CD8-positive, alpha-beta T cell (primary cell): ENCODE measurements at regions of chr1 and their contacts with region 1.

Region 1: DNA sequence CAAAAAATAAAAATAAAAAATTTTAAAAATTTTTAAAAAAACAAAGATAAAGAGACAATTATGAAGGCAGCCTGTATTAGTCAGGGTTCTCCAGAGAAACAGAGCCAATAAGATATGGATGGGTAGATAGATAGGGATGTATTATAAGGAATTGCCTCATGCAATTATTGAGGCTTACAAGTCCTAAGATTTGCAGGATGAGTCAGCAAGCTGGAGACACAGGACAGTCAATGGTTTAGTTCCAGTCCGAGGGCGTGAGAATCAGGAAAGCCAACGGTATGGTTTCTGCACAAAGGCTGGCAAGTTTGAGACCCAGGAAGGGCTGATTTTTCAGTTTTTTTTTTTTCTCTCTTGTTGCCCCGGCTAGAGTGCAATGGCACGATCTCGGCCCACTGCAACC is 24.1 kb upstream of the EIF4G3 start:
- DNase-seq: no peak
- ATAC-seq: no peak
- H3K4me3 ChIP-seq: no peak overlapping the region
- H3K4me3 Mint-ChIP-seq: no peak overlapping the region
- H3K27ac ChIP-seq: no peak overlapping the region
- H3K27ac Mint-ChIP-seq: no peak overlapping the region
- H3K4me1 ChIP-seq: no peaks in the 10 kb centered on the region
- H3K4me1 Mint-ChIP-seq: no peaks in the 10 kb centered on the region
- H3K27me3 ChIP-seq: no peaks in the 10 kb centered on the region
- H3K27me3 Mint-ChIP-seq: peaks cover 5% of the 10 kb centered on the region
- CTCF ChIP-seq: no peak

Region 2: DNA sequence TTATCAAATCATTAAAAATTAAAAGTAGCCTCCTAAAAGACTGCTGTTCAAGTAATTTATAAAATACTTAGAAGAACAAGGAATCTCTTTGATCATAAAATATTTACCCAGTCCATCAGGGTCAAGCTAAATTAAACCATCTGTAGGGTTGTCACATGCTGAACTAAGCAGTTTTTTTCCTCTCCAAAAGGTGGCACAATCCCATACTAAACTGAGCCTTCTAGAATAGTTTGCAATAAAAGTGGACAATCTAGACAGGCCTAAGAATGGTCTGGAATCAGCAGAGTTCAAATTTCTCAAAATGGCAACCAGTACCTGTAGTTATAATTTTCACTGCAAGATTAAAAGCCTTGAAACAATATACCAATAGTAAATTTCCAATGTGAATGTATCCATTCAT is 218.9 kb before region 1 on chr1:
- CTCF ChIA-PET with region 1: interaction called, 4 read pairs
- POLR2A ChIA-PET with region 1: no interaction called
- intact Hi-C with region 1: loop called (anchors 1 to 2 kb)
- DNase-seq: peak in 1 of 9 experiments; percentile 3
- ATAC-seq: no peak
- H3K4me3 ChIP-seq: no peak overlapping the region
- H3K4me3 Mint-ChIP-seq: no peak overlapping the region
- H3K27ac ChIP-seq: no peak overlapping the region
- H3K27ac Mint-ChIP-seq: peak overlapping the region; percentile 1
- H3K4me1 ChIP-seq: no peaks in the 10 kb centered on the region
- H3K4me1 Mint-ChIP-seq: no peaks in the 10 kb centered on the region
- H3K27me3 ChIP-seq: no peaks in the 10 kb centered on the region
- H3K27me3 Mint-ChIP-seq: no peaks in the 10 kb centered on the region
- CTCF ChIP-seq: no peak

Region 3: DNA sequence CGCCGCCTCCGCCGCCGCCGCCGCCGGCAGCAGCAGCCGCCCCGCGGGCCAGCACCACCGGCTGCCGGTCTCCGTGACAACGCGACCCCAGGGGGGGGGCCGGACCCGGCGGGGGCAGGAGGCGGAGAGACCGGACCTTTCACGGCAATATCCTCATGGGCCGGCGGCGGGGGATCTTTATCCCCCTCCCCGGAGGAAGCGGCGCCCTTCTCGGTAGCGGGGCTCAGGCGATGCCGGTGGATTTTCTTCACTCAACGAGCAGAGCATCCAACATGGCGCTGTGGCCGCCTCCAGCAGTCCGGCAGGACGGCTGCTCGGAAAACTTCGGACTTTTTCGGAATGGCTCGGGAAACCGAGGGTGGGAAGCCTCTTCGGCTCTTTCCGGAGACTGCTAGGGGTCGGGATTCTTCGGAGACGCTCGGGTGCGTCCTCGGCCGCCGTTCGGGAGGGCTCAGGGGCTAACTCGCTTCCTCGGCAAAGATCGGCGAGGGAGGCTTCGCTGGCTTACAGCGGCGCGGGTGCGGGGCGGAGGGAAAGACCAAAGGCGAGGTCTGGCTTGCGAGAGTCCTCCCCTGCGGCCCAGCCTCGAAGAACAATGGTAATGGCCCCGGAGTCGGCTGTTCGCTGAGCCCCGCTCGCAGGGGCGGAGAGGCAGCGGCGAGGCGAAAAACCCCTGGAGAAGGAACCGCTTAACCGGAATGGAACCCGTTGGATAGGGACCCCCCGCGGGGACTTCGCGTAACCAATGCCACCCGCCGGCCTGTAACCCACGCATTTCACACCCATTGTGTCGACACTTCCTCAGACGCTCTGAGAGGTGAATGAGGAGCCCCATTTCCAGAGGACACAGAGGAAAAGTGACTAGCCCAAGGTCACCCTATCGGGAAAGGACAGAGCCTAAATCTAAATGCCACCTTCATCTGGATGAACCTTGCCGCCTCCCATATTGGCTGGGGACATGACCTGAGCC is 23.9 kb before region 1 on chr1 and contains the start of gene EIF4G3:
- CTCF ChIA-PET with region 1: interaction called, 10 read pairs
- POLR2A ChIA-PET with region 1: no interaction called
- intact Hi-C with region 1: no loop called
- DNase-seq: peak; percentile 97 to 100 (median 99)
- ATAC-seq: peak; percentile 95
- H3K4me3 ChIP-seq: peak within 1 kb of the TSS; percentile 77 to 86
- H3K4me3 Mint-ChIP-seq: peak within 1 kb of the TSS; percentile 92
- H3K27ac ChIP-seq: peak within 1 kb of the TSS; percentile 78 to 88
- H3K27ac Mint-ChIP-seq: peak within 1 kb of the TSS; percentile 91
- H3K4me1 ChIP-seq: peaks cover 18% of the 10 kb centered on the region
- H3K4me1 Mint-ChIP-seq: peaks cover 24% of the 10 kb centered on the region
- H3K27me3 ChIP-seq: no peaks in the 10 kb centered on the region
- H3K27me3 Mint-ChIP-seq: no peaks in the 10 kb centered on the region
- CTCF ChIP-seq: no peak
- total RNA-seq, gene EIF4G3: 19.6 to 19.8 TPM

Region 4: DNA sequence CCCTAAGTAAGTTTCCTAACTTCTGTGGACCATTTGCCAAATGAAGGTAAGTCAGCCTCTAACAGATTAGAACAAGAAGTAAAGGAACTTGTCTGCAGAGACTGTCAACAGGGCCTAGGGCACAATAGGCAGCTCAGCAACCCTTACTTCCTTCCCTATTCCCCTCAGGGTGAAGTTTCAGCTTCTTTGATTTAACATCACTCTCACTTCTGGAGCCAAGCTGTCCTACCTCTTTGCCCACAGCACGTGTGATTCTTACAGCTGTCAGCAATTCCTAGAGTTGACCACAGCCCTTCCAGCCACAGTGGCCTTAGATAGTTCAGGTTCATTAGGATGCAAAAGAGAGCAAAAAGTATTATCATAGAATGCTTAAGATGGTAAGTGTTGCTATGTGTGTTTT is 16.5 kb before region 1 on chr1:
- CTCF ChIA-PET with region 1: interaction called, 25 read pairs
- POLR2A ChIA-PET with region 1: no interaction called
- intact Hi-C with region 1: no loop called
- DNase-seq: no peak
- ATAC-seq: no peak
- H3K4me3 ChIP-seq: no peak overlapping the region
- H3K4me3 Mint-ChIP-seq: no peak overlapping the region
- H3K27ac ChIP-seq: no peak overlapping the region
- H3K27ac Mint-ChIP-seq: no peak overlapping the region
- H3K4me1 ChIP-seq: no peaks in the 10 kb centered on the region
- H3K4me1 Mint-ChIP-seq: no peaks in the 10 kb centered on the region
- H3K27me3 ChIP-seq: no peaks in the 10 kb centered on the region
- H3K27me3 Mint-ChIP-seq: no peaks in the 10 kb centered on the region
- CTCF ChIP-seq: no peak

Region 5: GRCh38 chr1:21264898-21265297 is 64.1 kb after region 1 on chr1:
- CTCF ChIA-PET with region 1: no interaction called
- POLR2A ChIA-PET with region 1: no interaction called
- intact Hi-C with region 1: no loop called
- DNase-seq: no peak
- ATAC-seq: no peak
- H3K4me3 ChIP-seq: no peak overlapping the region
- H3K4me3 Mint-ChIP-seq: no peak overlapping the region
- H3K27ac ChIP-seq: no peak overlapping the region
- H3K27ac Mint-ChIP-seq: no peak overlapping the region
- H3K4me1 ChIP-seq: no peaks in the 10 kb centered on the region
- H3K4me1 Mint-ChIP-seq: peaks cover 11% of the 10 kb centered on the region
- H3K27me3 ChIP-seq: no peaks in the 10 kb centered on the region
- H3K27me3 Mint-ChIP-seq: no peaks in the 10 kb centered on the region
- CTCF ChIP-seq: no peak

Region 6: GRCh38 chr1:21324368-21325141 is 123.8 kb after region 1 on chr1:
- CTCF ChIA-PET with region 1: no interaction called
- POLR2A ChIA-PET with region 1: no interaction called
- intact Hi-C with region 1: no loop called
- DNase-seq: peak in 8 of 9 experiments; percentile 26 to 71 (median 64)
- ATAC-seq: peak; percentile 64
- H3K4me3 ChIP-seq: peak overlapping the region in 1 of 2 experiments; percentile 4
- H3K4me3 Mint-ChIP-seq: peak overlapping the region; percentile 76
- H3K27ac ChIP-seq: peak overlapping the region; percentile 13 to 51
- H3K27ac Mint-ChIP-seq: peak overlapping the region; percentile 96
- H3K4me1 ChIP-seq: peaks cover 61% of the 10 kb centered on the region
- H3K4me1 Mint-ChIP-seq: peaks cover 74% of the 10 kb centered on the region
- H3K27me3 ChIP-seq: no peaks in the 10 kb centered on the region
- H3K27me3 Mint-ChIP-seq: no peaks in the 10 kb centered on the region
- CTCF ChIP-seq: no peak